ENCODE measurements at regions of chr17 and their contacts with region 1.

Region 1: DNA sequence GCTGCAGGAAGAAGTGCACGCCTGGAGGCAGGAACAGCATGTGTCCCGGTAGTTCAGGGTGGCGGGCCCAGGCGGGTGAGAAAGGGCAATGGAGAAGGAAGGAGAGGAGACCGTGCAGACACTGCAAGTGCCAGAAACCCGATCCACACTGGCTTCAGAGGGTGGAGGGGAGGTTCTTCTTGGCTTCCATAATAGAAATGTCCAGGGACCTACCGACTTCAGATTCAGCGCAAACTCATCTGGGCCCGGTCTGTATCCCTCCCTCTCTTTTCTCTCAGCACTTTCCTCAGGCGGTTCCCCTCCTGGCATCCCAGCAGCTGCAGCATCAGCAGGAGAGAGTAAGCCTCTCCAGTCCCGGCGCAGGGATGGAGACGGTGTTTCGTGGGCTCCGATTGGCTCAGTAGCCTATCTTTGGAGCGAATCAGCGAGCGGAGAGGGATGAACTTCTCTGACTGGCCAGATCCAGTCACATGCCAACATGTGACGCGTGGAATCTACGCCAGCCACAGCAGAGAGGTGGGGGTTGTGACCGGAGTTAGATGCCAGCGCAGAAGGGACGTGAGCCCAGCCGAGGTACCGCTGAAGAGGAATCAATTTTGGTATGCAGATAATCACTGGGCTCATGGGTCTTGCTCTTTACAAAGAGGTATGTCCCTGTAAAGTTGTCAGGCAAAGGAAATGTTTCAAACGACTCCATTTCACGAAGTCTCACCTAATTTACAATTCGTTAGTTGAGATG is 1.9 kb upstream of the PRPSAP2 start:
- DNase-seq: peak; percentile 57 to 93 (median 85)
- ATAC-seq: peak; percentile 89
- H3K4me3 ChIP-seq: peak overlapping the region; percentile 76
- H3K4me3 Mint-ChIP-seq: peak overlapping the region; percentile 79 to 99 (median 96)
- H3K27ac ChIP-seq: peak overlapping the region; percentile 79
- H3K27ac Mint-ChIP-seq: peak overlapping the region; percentile 77 to 98 (median 92)
- H3K4me1 ChIP-seq: peaks cover 18 to 28% of the 10 kb centered on the region in 2 donors
- H3K4me1 Mint-ChIP-seq: peaks cover 29 to 52% (median 44%) of the 10 kb centered on the region in 7 donors
- H3K27me3 ChIP-seq: no peaks in the 10 kb centered on the region
- H3K27me3 Mint-ChIP-seq: no peaks in the 10 kb centered on the region

Region 2: GRCh38 chr17:17591355-17592298 is 1264.4 kb before region 1 on chr17 and contains the start of gene PEMT:
- CTCF ChIA-PET with region 1: no interaction called
- POLR2A ChIA-PET with region 1: no interaction called
- intact Hi-C with region 1: loop called in 1 of 2 experiments (anchors 10 kb)
- DNase-seq: peak; percentile 78 to 96 (median 93)
- ATAC-seq: peak; percentile 95
- H3K4me3 ChIP-seq: peak within 1 kb of the TSS; percentile 93
- H3K4me3 Mint-ChIP-seq: peak within 1 kb of the TSS; percentile 87 to 99 (median 93)
- H3K27ac ChIP-seq: peak within 1 kb of the TSS; percentile 79
- H3K27ac Mint-ChIP-seq: peak within 1 kb of the TSS; percentile 86 to 100 (median 93)
- H3K4me1 ChIP-seq: peaks cover 16 to 18% of the 10 kb centered on the region in 2 donors
- H3K4me1 Mint-ChIP-seq: peaks cover 14 to 32% (median 19%) of the 10 kb centered on the region in 7 donors
- H3K27me3 ChIP-seq: no peaks in the 10 kb centered on the region
- H3K27me3 Mint-ChIP-seq: no peaks in the 10 kb centered on the region
- total RNA-seq, gene PEMT: 9.5 to 15.0 (median 12.1) TPM

Region 3: GRCh38 chr17:18260332-18261144 is 595.5 kb before region 1 on chr17 and contains the start of gene MIEF2:
- CTCF ChIA-PET with region 1: no interaction called
- POLR2A ChIA-PET with region 1: no interaction called
- intact Hi-C with region 1: loop called in 1 of 2 experiments (anchors 2 kb)
- DNase-seq: peak; percentile 80 to 92 (median 91)
- ATAC-seq: peak; percentile 91
- H3K4me3 ChIP-seq: peak within 1 kb of the TSS; percentile 84
- H3K4me3 Mint-ChIP-seq: peak within 1 kb of the TSS; percentile 78 to 96 (median 84)
- H3K27ac ChIP-seq: peak within 1 kb of the TSS; percentile 95
- H3K27ac Mint-ChIP-seq: peak within 1 kb of the TSS; percentile 77 to 92 (median 84)
- H3K4me1 ChIP-seq: peaks cover 29 to 47% of the 10 kb centered on the region in 2 donors
- H3K4me1 Mint-ChIP-seq: peaks cover 11 to 57% (median 37%) of the 10 kb centered on the region in 7 donors
- H3K27me3 ChIP-seq: no peaks in the 10 kb centered on the region
- H3K27me3 Mint-ChIP-seq: no peaks in the 10 kb centered on the region
- total RNA-seq, gene MIEF2: 6.5 to 22.5 (median 15.1) TPM

Region 4: DNA sequence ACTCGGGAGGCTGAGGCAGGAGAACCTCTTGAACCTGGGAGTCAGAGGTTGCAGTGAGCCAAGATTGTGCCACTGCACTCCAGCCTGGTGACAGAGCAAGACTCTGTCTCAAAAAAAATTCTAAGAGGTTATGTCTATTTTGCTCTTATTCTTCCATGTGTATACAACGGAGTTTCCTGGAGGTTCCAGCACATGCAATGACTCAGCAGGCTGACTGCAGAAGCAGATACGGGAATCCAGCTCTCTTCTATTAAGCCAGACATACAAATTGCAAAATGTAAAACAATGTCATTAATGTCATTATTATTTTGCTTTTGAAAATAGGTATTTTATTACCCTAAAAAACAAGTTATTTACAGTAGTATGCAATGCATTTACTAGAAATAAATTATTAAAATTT is 577.1 kb before region 1 on chr17:
- CTCF ChIA-PET with region 1: no interaction called
- POLR2A ChIA-PET with region 1: no interaction called
- intact Hi-C with region 1: no loop called
- DNase-seq: no peak
- ATAC-seq: no peak
- H3K4me3 ChIP-seq: no peak overlapping the region
- H3K4me3 Mint-ChIP-seq: no peak overlapping the region
- H3K27ac ChIP-seq: no peak overlapping the region
- H3K27ac Mint-ChIP-seq: no peak overlapping the region
- H3K4me1 ChIP-seq: no peaks in the 10 kb centered on the region
- H3K4me1 Mint-ChIP-seq: no peaks in the 10 kb centered on the region
- H3K27me3 ChIP-seq: no peaks in the 10 kb centered on the region
- H3K27me3 Mint-ChIP-seq: no peaks in the 10 kb centered on the region

Region 5: DNA sequence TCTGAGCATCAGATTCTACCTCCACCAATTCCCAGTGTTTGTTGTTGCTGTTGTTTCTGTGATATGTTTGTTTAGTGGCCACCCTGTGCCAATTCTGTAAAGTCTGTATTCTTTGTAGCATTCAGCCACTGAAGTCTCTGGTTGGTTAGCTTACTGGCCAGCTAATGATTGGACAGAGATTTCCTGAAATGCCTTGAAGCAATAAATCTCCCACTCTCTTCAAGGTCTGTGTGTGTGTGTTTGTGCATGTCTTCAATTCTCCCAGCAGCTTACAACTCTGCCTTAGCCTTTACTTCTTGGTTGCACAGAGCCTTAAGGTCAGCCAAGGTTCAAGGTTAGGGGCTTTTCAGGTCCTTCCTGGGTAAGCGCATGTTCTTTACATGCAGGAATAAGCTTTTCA is 40.1 kb after region 1 on chr17:
- CTCF ChIA-PET with region 1: interaction called, 3 read pairs
- POLR2A ChIA-PET with region 1: interaction called, 13 read pairs
- intact Hi-C with region 1: loop called (anchors 1 kb)
- DNase-seq: no peak
- ATAC-seq: no peak
- H3K4me3 ChIP-seq: no peak overlapping the region
- H3K4me3 Mint-ChIP-seq: peak overlapping the region in 1 of 10 donors; percentile 46
- H3K27ac ChIP-seq: no peak overlapping the region
- H3K27ac Mint-ChIP-seq: no peak overlapping the region
- H3K4me1 ChIP-seq: peaks cover 6 to 15% of the 10 kb centered on the region in 2 donors
- H3K4me1 Mint-ChIP-seq: peaks cover 18 to 58% (median 50%) of the 10 kb centered on the region in 7 donors
- H3K27me3 ChIP-seq: no peaks in the 10 kb centered on the region
- H3K27me3 Mint-ChIP-seq: peaks cover 0 to 2% (median 0%) of the 10 kb centered on the region in 5 donors

Region 6: DNA sequence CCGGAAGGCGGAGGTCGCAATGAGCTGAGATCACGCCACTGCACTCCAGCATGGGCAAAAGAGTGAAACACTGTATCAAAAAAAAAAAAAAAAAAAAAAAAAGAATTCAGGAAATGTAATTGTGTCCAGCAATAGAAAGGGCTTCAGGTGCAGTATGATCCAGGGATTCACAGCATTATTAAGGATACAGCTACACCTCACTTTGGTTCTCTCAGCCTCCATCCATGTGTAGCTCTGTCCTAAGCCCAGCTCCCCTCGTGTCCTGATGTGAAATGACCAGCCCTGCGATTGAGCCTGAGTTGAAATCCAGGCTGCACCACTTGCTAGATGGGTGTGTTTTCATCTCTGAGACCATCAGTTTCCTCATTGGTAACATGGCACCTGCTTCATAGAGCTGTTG is 99.0 kb after region 1 on chr17:
- CTCF ChIA-PET with region 1: no interaction called
- POLR2A ChIA-PET with region 1: interaction called, 7 read pairs
- intact Hi-C with region 1: loop called in 1 of 2 experiments (anchors 1 kb)
- DNase-seq: no peak
- ATAC-seq: no peak
- H3K4me3 ChIP-seq: peak overlapping the region; percentile 33
- H3K4me3 Mint-ChIP-seq: peak overlapping the region; percentile 52 to 93 (median 73)
- H3K27ac ChIP-seq: peak overlapping the region; percentile 62
- H3K27ac Mint-ChIP-seq: peak overlapping the region; percentile 81 to 98 (median 91)
- H3K4me1 ChIP-seq: peaks cover 16 to 34% of the 10 kb centered on the region in 2 donors
- H3K4me1 Mint-ChIP-seq: peaks cover 26 to 70% (median 55%) of the 10 kb centered on the region in 7 donors
- H3K27me3 ChIP-seq: no peaks in the 10 kb centered on the region
- H3K27me3 Mint-ChIP-seq: peaks cover 0 to 7% (median 0%) of the 10 kb centered on the region in 5 donors

Region 7: GRCh38 chr17:19362277-19363113 is 506.5 kb after region 1 on chr17 and contains the start of gene B9D1:
- CTCF ChIA-PET with region 1: no interaction called
- POLR2A ChIA-PET with region 1: no interaction called
- intact Hi-C with region 1: loop called in 1 of 2 experiments (anchors 5 kb)
- DNase-seq: peak; percentile 90 to 97 (median 92)
- ATAC-seq: peak; percentile 96
- H3K4me3 ChIP-seq: peak within 1 kb of the TSS; percentile 94
- H3K4me3 Mint-ChIP-seq: peak within 1 kb of the TSS; percentile 75 to 96 (median 92)
- H3K27ac ChIP-seq: peak within 1 kb of the TSS; percentile 66
- H3K27ac Mint-ChIP-seq: peak within 1 kb of the TSS; percentile 63 to 93 (median 91)
- H3K4me1 ChIP-seq: peaks cover 6 to 11% of the 10 kb centered on the region in 2 donors
- H3K4me1 Mint-ChIP-seq: peaks cover 0 to 21% (median 6%) of the 10 kb centered on the region in 7 donors
- H3K27me3 ChIP-seq: no peaks in the 10 kb centered on the region
- H3K27me3 Mint-ChIP-seq: peaks cover 7 to 25% (median 19%) of the 10 kb centered on the region in 5 donors
- total RNA-seq, gene B9D1: 0.58 to 5.0 (median 2.4) TPM

Region 8: DNA sequence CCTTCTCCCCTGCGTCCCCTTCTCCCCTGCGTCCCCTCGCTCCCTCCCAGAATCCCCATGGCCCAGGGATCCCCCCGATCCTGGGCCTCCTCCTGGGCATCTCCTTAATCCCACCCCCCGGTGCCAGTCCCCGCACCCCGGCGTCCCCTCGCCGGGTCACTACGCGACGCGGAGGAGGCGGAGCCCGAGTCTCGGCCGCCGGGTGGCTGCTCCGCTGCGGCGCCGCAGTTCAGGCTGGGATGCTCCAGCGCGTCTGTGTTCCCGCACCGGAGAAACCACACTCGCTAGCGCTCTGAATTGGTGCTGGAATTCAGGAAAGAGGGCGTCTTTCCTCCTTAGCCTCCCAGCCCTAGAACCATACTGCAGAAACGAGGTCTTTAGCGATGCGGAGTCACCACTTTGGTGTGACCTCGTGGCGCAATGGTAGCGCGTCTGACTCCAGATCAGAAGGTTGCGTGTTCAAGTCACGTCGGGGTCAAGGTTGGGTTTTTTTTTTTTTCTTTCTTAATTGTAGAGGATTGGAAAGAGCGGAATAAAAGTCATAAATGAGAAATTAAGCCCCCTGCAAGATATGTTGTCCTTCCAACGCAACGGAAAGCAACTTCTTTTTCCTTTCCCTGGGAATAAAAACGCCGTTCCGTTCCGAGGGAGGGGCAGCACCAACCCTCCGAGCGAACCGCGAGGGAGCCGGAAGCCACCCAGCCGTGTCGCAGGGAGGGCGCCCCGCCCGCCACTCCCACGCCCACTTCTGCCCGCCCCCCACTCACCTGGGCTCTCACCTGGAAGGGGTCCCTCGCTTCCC is 652.0 kb after region 1 on chr17:
- CTCF ChIA-PET with region 1: no interaction called
- POLR2A ChIA-PET with region 1: no interaction called
- intact Hi-C with region 1: loop called in 1 of 2 experiments (anchors 10 kb)
- DNase-seq: peak; percentile 82 to 96 (median 90)
- ATAC-seq: peak; percentile 85
- H3K4me3 ChIP-seq: peak overlapping the region; percentile 99
- H3K4me3 Mint-ChIP-seq: peak overlapping the region; percentile 87 to 99 (median 91)
- H3K27ac ChIP-seq: peak overlapping the region; percentile 67
- H3K27ac Mint-ChIP-seq: peak overlapping the region; percentile 95 to 99 (median 96)
- H3K4me1 ChIP-seq: peaks cover 0 to 6% of the 10 kb centered on the region in 2 donors
- H3K4me1 Mint-ChIP-seq: peaks cover 8 to 13% (median 11%) of the 10 kb centered on the region in 7 donors
- H3K27me3 ChIP-seq: no peaks in the 10 kb centered on the region
- H3K27me3 Mint-ChIP-seq: peaks cover 0 to 24% (median 0%) of the 10 kb centered on the region in 5 donors